Head of caudate nucleus (tissue), 42 donors: ENCODE measurements at regions of chr1 and their contacts with region 1.

Region 1: GRCh38 chr1:27392096-27392777 is at the start of gene GPR3:
- DNase-seq: peak; percentile 81 to 96 (median 91)

Region 2: DNA sequence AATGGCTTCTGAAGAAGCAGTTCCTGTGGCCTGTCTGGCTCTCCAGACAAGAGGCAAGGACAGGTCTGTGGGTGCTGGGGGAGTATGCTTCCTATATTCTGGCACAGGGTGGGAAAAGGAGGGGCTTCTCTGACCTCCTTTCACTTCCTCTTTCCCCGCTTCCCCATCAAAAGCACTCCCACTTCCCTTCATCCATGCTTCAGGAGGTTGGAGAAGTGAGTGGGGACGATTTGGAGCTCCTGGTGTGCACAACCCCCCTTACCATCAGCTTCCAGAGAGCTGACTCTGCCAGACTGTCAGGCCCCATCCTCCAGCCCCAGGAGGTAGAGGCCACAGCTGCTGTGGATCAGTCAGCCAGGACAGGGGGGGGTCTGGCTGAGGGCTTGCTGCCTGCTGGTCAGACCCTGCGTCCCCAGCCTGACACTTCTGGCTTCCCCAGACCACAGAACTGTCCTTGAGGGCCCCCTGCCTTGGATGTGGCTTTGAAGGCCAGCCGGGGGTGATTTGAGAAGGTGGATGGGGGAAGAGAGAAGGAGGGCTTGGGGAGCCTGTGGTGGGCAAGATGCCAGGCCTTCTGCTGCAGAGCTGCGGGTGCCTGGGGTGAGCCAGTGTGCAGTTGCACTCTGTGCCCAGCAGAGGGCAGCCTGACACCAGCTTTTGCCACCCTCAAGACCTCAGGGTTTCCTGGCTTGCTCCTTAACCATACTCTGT is 91.7 kb before region 1 on chr1:
- intact Hi-C with region 1: loop called (anchors 2 kb)
- DNase-seq: peak; percentile 64 to 93 (median 87)

Region 3: GRCh38 chr1:27357281-27358037 is 34.8 kb before region 1 on chr1:
- intact Hi-C with region 1: loop called (anchors 5 kb)
- DNase-seq: peak; percentile 28 to 89 (median 72)